Head of caudate nucleus (tissue), 42 donors: ENCODE measurements at regions of chrX and their contacts with region 1.

Region 1: GRCh38 chrX:8749697-8750096 is 17.8 kb upstream of the ANOS1 start:
- DNase-seq: no peak

Region 2: GRCh38 chrX:8632924-8633323 is 116.8 kb before region 1 on chrX:
- intact Hi-C with region 1: no loop called
- DNase-seq: no peak

Region 3: DNA sequence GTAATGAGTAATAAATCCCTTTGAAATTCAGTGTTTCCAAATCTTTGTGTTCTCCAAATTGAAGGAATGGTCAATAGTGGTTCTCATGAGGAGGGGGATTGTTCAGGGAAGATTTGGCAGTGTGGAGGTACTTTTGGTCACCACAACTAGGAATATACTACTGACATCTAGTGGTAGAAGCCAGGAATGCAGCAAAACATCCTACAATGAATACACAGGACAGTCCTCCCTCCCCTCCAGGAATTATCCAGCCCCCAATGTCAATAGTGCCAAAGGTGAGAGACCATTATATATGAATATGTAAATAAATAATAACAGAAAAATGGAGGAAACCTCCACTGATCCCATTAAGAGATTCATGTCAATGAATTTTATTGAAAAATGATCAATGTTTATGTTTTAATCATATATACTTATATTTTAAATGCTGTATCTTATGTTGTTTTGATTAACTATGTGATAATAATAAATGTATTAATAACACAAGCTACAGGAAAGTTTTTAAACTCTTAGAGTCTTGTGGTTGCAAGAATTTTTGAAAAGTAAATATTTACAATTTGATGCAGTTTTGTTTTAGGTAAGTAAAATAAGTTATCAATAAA is 65.9 kb after region 1 on chrX:
- intact Hi-C with region 1: loop called (anchors 5 kb)
- DNase-seq: peak in 12 of 42 donors; percentile 13 to 56 (median 34)

Region 4: GRCh38 chrX:8897259-8897658 is 147.6 kb after region 1 on chrX:
- intact Hi-C with region 1: no loop called
- DNase-seq: no peak